H1 (cell line): ENCODE measurements at regions of chr2 and their contacts with region 1.

Region 1: DNA sequence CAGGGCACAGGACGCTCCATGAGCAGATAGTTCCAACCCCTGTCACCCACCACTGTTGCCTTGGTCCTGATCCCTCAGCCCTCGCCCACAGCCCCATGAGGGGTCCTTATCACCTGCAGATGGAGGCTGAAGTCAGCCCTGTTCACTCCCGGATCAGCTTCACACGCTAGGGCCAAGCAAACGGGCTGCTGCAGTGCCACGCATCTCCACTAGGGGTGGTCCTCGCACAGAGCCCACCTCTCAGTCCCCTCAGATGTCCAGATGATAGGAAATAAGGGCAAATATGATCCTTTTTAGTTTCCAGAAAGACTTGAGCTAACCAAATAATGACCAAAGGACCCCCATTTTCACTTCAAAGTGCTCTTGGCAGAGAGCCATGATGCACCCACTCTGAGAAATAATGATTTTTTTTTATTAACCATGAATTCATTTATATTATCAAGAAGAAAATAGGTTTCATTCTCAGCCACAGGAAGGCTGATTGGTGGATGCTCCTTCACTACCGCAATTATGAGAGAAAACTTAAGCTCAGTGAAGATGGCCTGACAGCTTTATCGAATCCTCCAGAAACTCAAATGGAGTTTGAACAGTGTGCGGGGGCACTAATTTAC is 71.9 kb upstream of the KLHL29 start:
- DNase-seq: peak; percentile 33 to 91
- H3K4me3 ChIP-seq: no peak overlapping the region
- H3K27ac ChIP-seq: no peak overlapping the region
- H3K4me1 ChIP-seq: no peaks in the 10 kb centered on the region
- H3K27me3 ChIP-seq: no peaks in the 10 kb centered on the region; a peak in 1 of 7 replicates
- CTCF ChIP-seq: peak; percentile 72 to 99 (median 96)
- EP300 ChIP-seq: no peak
- POLR2A ChIP-seq: no peak
- RAD21 ChIP-seq: peak; percentile 74 to 81

Region 2: DNA sequence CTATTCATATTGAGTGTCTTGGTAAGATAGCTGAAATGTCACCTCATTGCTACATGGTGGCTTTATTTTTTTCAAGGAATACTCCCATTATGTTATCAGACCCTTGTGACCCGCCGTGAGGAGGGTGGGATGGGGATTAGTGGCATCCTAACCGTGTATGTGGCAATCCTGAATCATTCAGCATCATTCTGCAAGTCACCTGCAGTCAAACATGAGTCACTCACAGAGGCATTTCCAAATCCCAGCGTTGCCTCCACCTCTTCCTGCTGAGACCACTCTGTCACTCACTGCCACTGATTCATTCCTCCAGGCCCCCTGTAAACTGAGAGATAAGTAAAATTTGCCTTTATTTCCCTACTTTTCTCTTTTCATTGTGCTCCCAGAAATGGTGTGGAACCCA is 235.5 kb before region 1 on chr2:
- CTCF ChIA-PET with region 1: no interaction called
- POLR2A ChIA-PET with region 1: no interaction called
- DNase-seq: peak in 1 of 2 experiments; percentile 17
- H3K4me3 ChIP-seq: no peak overlapping the region
- H3K27ac ChIP-seq: no peak overlapping the region
- H3K4me1 ChIP-seq: peaks cover 0 to 3% (median 0%) of the 10 kb centered on the region in 4 experiments; a peak in 1 of 7 replicates
- H3K27me3 ChIP-seq: no peaks in the 10 kb centered on the region
- CTCF ChIP-seq: no peak
- EP300 ChIP-seq: no peak
- POLR2A ChIP-seq: no peak
- RAD21 ChIP-seq: no peak

Region 3: GRCh38 chr2:23286758-23287704 is 26.1 kb before region 1 on chr2:
- CTCF ChIA-PET with region 1: interaction called, 13 read pairs
- POLR2A ChIA-PET with region 1: no interaction called
- DNase-seq: no peak
- H3K4me3 ChIP-seq: no peak overlapping the region
- H3K27ac ChIP-seq: no peak overlapping the region
- H3K4me1 ChIP-seq: peaks cover 0 to 8% (median 2%) of the 10 kb centered on the region in 4 experiments; a peak in 4 of 7 replicates
- H3K27me3 ChIP-seq: no peaks in the 10 kb centered on the region
- CTCF ChIP-seq: no peak
- EP300 ChIP-seq: no peak
- POLR2A ChIP-seq: no peak
- RAD21 ChIP-seq: no peak

Region 4: DNA sequence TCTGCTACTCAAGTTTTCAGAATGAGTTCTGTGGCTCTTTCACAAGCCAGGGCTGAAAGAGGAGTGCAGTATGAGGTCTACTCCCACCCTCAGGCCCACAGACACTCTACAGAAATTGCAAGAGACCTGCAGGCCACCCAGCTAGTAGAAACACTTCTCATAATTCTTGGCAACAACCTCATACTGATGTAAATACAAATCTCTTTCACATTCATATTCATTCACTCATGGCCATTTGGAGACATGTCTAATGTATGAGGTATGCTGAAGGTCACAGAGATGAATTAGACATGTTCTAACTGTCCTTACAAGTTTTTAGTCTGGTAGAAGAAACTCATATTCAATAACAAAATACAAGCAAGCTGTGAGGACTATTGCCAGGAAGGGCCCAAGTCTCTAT is 12.0 kb before region 1 on chr2:
- CTCF ChIA-PET with region 1: interaction called, 28 read pairs
- POLR2A ChIA-PET with region 1: no interaction called
- DNase-seq: no peak
- H3K4me3 ChIP-seq: no peak overlapping the region
- H3K27ac ChIP-seq: no peak overlapping the region
- H3K4me1 ChIP-seq: no peaks in the 10 kb centered on the region
- H3K27me3 ChIP-seq: 0 out of 7 replicates have a peak, but pooled peaks cover 0 to 2% (median 0%) of the 10 kb centered on the region in 4 experiments
- CTCF ChIP-seq: no peak
- EP300 ChIP-seq: no peak
- POLR2A ChIP-seq: no peak
- RAD21 ChIP-seq: no peak

Region 5: GRCh38 chr2:23323917-23324680 is 11.0 kb after region 1 on chr2:
- CTCF ChIA-PET with region 1: interaction called, 17 read pairs
- POLR2A ChIA-PET with region 1: no interaction called
- DNase-seq: no peak
- H3K4me3 ChIP-seq: no peak overlapping the region
- H3K27ac ChIP-seq: no peak overlapping the region
- H3K4me1 ChIP-seq: 0 out of 7 replicates have a peak, but pooled peaks cover 0 to 2% (median 0%) of the 10 kb centered on the region in 4 experiments
- H3K27me3 ChIP-seq: no peaks in the 10 kb centered on the region; a peak in 1 of 7 replicates
- CTCF ChIP-seq: no peak
- EP300 ChIP-seq: no peak
- POLR2A ChIP-seq: no peak
- RAD21 ChIP-seq: no peak

Region 6: DNA sequence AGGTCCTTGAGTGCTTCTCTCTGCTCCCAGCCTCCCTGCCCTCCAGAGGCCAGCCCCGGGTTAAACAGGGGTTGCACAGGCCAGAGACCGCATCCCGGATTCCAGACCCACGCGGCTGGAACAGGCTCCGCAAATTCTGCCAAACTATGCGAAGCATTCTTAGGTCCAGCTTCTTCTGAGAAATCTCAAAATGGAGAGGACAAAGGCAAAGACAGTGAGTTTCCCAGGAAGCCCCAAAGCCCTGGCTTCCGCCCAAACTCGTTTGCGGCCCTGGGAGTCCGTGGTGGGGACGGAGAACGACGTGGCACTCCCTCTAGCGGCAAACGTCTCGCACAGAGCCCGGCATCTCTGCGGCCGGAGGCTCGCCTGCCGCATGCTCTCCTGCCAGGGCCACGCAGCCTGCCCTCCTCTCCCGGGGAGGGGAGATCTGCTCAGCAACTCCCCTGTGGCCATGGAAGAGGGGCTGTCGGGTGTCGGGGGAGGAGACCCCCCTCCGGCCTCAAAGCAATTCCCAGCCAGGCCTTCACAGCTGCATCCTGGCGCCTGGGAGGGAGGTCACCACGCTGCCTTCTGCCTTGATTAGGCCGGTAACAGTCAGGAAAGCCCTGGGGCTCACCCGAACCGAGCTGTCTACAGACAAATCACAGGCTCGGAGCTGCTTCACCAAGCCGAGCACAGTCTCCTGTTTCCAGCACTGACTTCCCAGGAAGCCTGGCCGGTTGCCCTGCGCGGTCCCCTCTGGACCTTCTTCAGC is 38.5 kb after region 1 on chr2:
- CTCF ChIA-PET with region 1: interaction called, 13 read pairs
- POLR2A ChIA-PET with region 1: no interaction called
- DNase-seq: peak; percentile 61 to 92
- H3K4me3 ChIP-seq: peak overlapping the region in 3 of 4 experiments; percentile 5 to 19 (median 19); a peak in 1 of 8 replicates
- H3K27ac ChIP-seq: no peak overlapping the region
- H3K4me1 ChIP-seq: peaks cover 0 to 5% (median 3%) of the 10 kb centered on the region in 4 experiments; a peak in 5 of 7 replicates
- H3K27me3 ChIP-seq: peaks cover 0 to 14% (median 8%) of the 10 kb centered on the region in 4 experiments; a peak in 5 of 7 replicates
- CTCF ChIP-seq: peak; percentile 78 to 90 (median 90)
- EP300 ChIP-seq: no peak
- POLR2A ChIP-seq: peak in 1 of 2 experiments; percentile 17; a peak in 1 of 3 replicates
- RAD21 ChIP-seq: peak; percentile 64 to 78

Region 7: GRCh38 chr2:23384551-23385349 is 71.6 kb after region 1 on chr2 and contains the start of gene KLHL29:
- CTCF ChIA-PET with region 1: no interaction called
- POLR2A ChIA-PET with region 1: no interaction called
- DNase-seq: peak in 1 of 2 experiments; percentile 75
- H3K4me3 ChIP-seq: peak within 1 kb of the TSS; percentile 45 to 71 (median 52)
- H3K27ac ChIP-seq: no peak within 1 kb of the TSS
- H3K4me1 ChIP-seq: peaks cover 0 to 10% (median 2%) of the 10 kb centered on the region in 4 experiments; a peak in 4 of 7 replicates
- H3K27me3 ChIP-seq: peaks cover 26 to 58% (median 49%) of the 10 kb centered on the region in 4 experiments
- CTCF ChIP-seq: no peak
- EP300 ChIP-seq: no peak
- POLR2A ChIP-seq: no peak
- RAD21 ChIP-seq: no peak
- total RNA-seq, gene KLHL29: 4.3 and 4.7 TPM in 2 replicates

Region 8: GRCh38 chr2:23545396-23545795 is 232.3 kb after region 1 on chr2:
- CTCF ChIA-PET with region 1: no interaction called
- POLR2A ChIA-PET with region 1: no interaction called
- DNase-seq: no peak
- H3K4me3 ChIP-seq: no peak overlapping the region
- H3K27ac ChIP-seq: no peak overlapping the region
- H3K4me1 ChIP-seq: peaks cover 0 to 5% (median 1%) of the 10 kb centered on the region in 4 experiments; a peak in 3 of 7 replicates
- H3K27me3 ChIP-seq: no peaks in the 10 kb centered on the region
- CTCF ChIP-seq: no peak
- EP300 ChIP-seq: no peak
- POLR2A ChIP-seq: no peak
- RAD21 ChIP-seq: peak in 1 of 2 experiments; percentile 4; a peak in 1 of 4 replicates